ENCODE measurements at regions of chr2 and their contacts with region 1.

Region 1: GRCh38 chr2:219294356-219295351 is 14.5 kb downstream of the PTPRN start:
- DNase-seq: peak; percentile 89
- H3K4me3 Mint-ChIP-seq: peak overlapping the region; percentile 77
- H3K27ac Mint-ChIP-seq: no peak overlapping the region
- H3K4me1 Mint-ChIP-seq: peaks cover 20% of the 10 kb centered on the region
- H3K27me3 Mint-ChIP-seq: peaks cover 3% of the 10 kb centered on the region

Region 2: DNA sequence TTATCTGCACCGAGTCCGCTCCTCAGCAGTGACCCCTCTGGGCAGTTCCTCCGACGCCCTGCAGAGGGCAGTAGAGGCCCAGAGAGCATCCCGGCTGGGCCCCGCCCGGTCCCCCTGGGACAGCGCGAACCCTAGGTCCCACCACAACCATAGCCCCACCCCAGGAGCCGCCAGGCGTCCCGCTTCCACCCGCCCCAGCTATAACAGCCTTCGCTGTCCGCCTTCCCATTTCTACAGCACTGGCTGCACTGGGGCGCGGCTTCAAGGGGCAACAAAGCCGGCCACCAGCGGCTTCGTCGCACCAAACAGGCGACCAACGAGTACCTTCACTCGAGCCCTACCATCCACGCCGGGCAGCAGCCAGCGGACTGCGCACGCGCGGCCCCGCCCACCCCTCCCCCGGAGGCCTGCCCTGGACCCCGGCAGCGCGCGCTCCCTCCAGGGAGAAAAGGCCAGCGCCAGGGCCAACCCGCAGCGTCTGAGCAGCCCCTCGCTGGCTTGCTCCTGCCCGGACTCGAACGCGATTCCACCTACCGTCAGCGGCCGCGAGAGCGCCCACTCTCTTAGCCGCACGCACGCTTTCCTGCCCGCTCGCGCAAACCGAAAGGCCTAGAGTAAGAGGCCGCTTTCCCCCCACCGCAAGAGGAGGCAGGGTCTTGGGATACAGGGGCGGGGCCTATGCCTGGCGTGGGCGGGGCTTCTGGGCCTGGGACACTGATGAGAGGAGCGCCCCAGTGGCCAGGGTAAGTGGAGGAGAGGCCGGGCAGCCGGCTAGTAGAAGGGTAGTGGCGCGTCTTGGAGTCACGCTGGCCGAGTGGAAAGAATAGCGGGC is 134.3 kb before region 1 on chr2 and contains the start of gene NHEJ1:
- CTCF ChIA-PET with region 1: interaction called, 70 read pairs
- intact Hi-C with region 1: loop called (anchors 1 kb)
- DNase-seq: peak; percentile 96
- H3K4me3 Mint-ChIP-seq: peak within 1 kb of the TSS; percentile 80
- H3K27ac Mint-ChIP-seq: peak within 1 kb of the TSS; percentile 88
- H3K4me1 Mint-ChIP-seq: peaks cover 13% of the 10 kb centered on the region
- H3K27me3 Mint-ChIP-seq: no peaks in the 10 kb centered on the region
- total RNA-seq, gene NHEJ1: 24.4 to 26.6 TPM

Region 3: GRCh38 chr2:219206442-219207253 is 88.0 kb before region 1 on chr2 and contains the start of gene ZFAND2B:
- CTCF ChIA-PET with region 1: interaction called, 21 read pairs
- intact Hi-C with region 1: no loop called
- DNase-seq: peak; percentile 94
- H3K4me3 Mint-ChIP-seq: peak within 1 kb of the TSS; percentile 94
- H3K27ac Mint-ChIP-seq: peak within 1 kb of the TSS; percentile 96
- H3K4me1 Mint-ChIP-seq: peaks cover 32% of the 10 kb centered on the region
- H3K27me3 Mint-ChIP-seq: no peaks in the 10 kb centered on the region
- total RNA-seq, gene ZFAND2B: 32.6 to 33.6 TPM

Region 4: GRCh38 chr2:219245148-219245898 is 49.3 kb before region 1 on chr2 and contains the starts of genes GLB1L and STK16:
- CTCF ChIA-PET with region 1: interaction called, 25 read pairs
- intact Hi-C with region 1: no loop called
- DNase-seq: peak; percentile 92
- H3K4me3 Mint-ChIP-seq: peak within 1 kb of the TSS; percentile 98
- H3K27ac Mint-ChIP-seq: peak within 1 kb of the TSS; percentile 99
- H3K4me1 Mint-ChIP-seq: peaks cover 57% of the 10 kb centered on the region
- H3K27me3 Mint-ChIP-seq: no peaks in the 10 kb centered on the region
- total RNA-seq, gene GLB1L: 2.1 TPM
- total RNA-seq, gene STK16: 33.7 to 35.5 TPM

Region 5: DNA sequence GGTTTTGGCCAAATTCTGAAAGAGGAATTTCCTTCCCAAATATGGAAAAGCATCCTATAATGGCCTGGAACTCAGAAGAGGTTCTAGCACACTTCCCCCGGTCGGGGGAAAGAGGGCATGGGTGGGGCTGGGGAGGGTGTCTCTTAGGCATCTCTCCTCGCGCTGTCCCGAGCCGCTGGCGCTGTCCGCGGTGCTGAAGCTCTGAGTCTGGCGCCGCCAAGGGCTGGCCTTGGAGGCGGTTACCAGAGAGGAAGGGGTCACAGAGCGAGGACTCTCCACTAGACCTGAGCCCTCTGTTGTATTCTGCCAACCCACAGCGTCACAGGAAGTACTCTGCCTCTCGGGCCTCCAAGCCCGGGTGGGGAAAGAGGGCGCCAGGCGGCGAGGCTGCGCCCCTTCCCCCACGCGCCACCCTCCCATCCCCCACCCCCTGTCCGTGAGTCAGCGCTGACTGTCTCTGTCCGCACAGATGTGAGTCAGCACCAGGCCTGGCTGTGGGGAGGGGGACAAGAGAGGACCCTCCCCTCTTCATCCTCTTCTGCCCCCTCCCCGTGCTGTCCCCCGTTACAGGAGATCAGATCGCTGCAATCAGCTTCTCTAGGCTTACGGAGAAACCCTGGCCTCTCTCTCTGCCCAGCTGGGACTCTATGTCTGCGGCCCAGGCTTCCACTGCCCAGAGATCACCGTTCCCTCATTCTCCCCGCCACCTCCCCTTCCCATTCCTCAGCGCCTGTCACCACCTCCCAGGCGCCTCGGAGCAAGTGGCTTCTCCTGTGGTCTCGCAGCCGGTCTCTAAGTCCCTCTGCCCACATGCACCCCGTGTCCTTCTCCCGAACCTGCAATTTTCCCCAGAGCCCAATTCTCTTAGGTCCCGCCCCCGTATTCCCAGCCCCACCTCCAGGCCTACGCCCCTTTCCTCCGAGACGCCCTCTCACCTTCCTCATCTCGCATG is 13.8 kb after region 1 on chr2:
- CTCF ChIA-PET with region 1: interaction called, 17 read pairs
- intact Hi-C with region 1: no loop called
- DNase-seq: peak; percentile 80
- H3K4me3 Mint-ChIP-seq: no peak overlapping the region
- H3K27ac Mint-ChIP-seq: no peak overlapping the region
- H3K4me1 Mint-ChIP-seq: peaks cover 8% of the 10 kb centered on the region
- H3K27me3 Mint-ChIP-seq: peaks cover 52% of the 10 kb centered on the region

Region 6: GRCh38 chr2:219362524-219363164 is 68.0 kb after region 1 on chr2:
- CTCF ChIA-PET with region 1: no interaction called
- intact Hi-C with region 1: no loop called
- DNase-seq: no peak
- H3K4me3 Mint-ChIP-seq: no peak overlapping the region
- H3K27ac Mint-ChIP-seq: no peak overlapping the region
- H3K4me1 Mint-ChIP-seq: peaks cover 3% of the 10 kb centered on the region
- H3K27me3 Mint-ChIP-seq: peaks cover 13% of the 10 kb centered on the region